Left ventricle myocardium inferior (tissue), 1 donor: ENCODE measurements at regions of chr13 and their contacts with region 1.

Region 1: DNA sequence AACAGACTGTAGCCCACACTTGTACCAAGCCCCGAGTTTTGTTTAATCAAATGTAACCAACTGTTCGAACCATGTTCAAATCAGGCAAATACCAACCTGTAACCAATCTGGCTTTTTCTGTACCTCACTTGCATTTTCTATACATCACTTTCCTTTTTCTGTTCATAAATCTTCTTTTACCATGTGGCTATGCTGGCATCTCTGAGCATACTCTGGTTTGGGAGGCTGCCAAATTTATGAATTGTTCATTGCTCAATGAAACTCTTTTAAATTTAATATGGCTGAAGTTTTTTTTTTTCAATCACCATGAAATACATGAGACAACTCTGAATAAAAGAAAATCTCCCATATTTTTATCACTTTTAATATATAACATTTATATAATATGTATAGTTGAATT is 256.1 kb downstream of the SLITRK6 start:
- DNase-seq: no peak
- H3K4me3 ChIP-seq: no peak overlapping the region
- H3K27ac ChIP-seq: no peak overlapping the region
- H3K4me1 ChIP-seq: no peaks in the 10 kb centered on the region
- H3K27me3 ChIP-seq: no peaks in the 10 kb centered on the region
- CTCF ChIP-seq: no peak

Region 2: DNA sequence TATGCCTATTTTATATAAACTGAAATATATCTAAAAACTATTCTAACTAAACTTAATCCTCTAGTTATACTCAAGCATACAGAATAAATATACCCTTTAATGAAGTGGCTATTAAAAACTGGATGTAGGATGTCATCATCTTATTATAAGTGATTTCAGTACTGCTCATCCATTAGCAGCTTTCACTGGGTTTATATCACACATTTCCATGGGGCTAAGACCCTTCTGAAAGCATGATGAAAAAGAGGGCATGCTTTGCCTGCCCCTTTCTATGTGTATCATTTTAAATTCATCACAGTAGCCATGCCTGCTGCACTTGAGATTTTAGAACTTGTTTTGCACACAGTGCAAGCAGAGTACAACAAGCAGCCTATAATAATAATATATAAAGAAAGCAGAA is 221.4 kb before region 1 on chr13:
- intact Hi-C with region 1: no loop called
- DNase-seq: no peak
- H3K4me3 ChIP-seq: no peak overlapping the region
- H3K27ac ChIP-seq: no peak overlapping the region
- H3K4me1 ChIP-seq: no peaks in the 10 kb centered on the region
- H3K27me3 ChIP-seq: no peaks in the 10 kb centered on the region
- CTCF ChIP-seq: no peak

Region 3: DNA sequence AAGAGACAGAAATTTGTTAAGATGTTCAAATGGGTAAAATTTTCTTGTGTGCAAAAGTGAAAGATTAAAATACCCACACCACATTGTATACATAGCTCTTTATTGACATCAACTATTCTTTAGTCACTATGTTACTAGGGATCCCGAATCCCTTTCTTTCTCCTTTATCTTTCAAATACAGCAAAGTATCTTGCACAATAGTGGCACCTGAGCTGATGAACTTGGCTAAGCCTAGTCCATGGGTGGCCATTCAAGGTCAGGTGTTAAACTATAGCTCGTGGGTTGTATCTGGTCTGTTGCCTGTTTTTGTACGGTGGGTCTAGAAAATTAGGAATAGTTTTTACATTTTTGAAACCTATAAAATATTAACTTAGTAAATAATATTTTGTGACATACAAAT is 45.2 kb after region 1 on chr13:
- intact Hi-C with region 1: loop called (anchors 2 kb)
- DNase-seq: no peak
- H3K4me3 ChIP-seq: no peak overlapping the region
- H3K27ac ChIP-seq: no peak overlapping the region
- H3K4me1 ChIP-seq: no peaks in the 10 kb centered on the region
- H3K27me3 ChIP-seq: no peaks in the 10 kb centered on the region
- CTCF ChIP-seq: no peak